ENCODE measurements at regions of chr7 and their contacts with region 1.

Region 1: GRCh38 chr7:91940572-91941341 is at the start of gene AKAP9:
- DNase-seq: peak; percentile 97
- H3K4me3 Mint-ChIP-seq: peak within 1 kb of the TSS; percentile 89
- H3K27ac Mint-ChIP-seq: peak within 1 kb of the TSS; percentile 88
- H3K4me1 Mint-ChIP-seq: peaks cover 23% of the 10 kb centered on the region
- H3K27me3 Mint-ChIP-seq: peaks cover 8% of the 10 kb centered on the region
- total RNA-seq, gene AKAP9: 36.0 and 38.2 TPM in 2 replicates

Region 2: DNA sequence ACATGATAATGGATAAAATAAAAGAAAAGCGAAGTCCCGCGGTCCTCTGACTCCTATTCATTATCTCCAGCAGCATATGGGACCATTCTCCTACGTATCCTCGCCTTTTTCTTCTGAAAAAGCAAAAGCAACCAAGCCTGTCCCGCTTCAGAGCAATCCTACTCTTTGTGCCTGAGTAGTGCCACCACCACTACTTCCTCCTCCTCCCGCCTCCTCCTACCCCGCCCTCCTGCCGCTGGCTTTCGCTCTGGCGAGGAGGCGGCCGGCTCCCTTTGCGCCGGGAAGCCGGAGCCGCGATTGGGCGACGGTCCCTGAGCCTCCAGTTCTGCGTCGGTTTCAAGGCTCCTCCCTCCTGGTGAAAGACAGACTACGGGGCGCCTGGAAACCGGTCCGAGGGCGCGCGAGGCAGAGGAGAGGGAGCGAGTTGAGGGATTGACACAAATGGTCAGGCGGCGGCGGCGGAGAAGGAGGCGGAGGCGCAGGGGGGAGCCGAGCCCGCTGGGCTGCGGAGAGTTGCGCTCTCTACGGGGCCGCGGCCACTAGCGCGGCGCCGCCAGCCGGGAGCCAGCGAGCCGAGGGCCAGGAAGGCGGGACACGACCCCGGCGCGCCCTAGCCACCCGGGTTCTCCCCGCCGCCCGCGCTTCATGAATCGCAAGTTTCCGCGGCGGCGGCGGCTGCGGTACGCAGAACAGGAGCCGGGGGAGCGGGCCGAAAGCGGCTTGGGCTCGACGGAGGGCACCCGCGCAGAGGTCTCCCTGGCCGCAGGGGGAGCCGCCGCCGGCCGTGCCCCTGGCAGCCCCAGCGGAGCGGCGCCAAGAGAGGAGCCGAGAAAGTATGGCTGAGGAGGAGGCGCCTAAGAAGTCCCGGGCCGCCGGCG is 676.5 kb before region 1 on chr7 and contains the start of gene FZD1:
- intact Hi-C with region 1: loop called (anchors 5 kb)
- DNase-seq: peak; percentile 92
- H3K4me3 Mint-ChIP-seq: peak within 1 kb of the TSS; percentile 93
- H3K27ac Mint-ChIP-seq: peak within 1 kb of the TSS; percentile 89
- H3K4me1 Mint-ChIP-seq: peaks cover 11% of the 10 kb centered on the region
- H3K27me3 Mint-ChIP-seq: peaks cover 47% of the 10 kb centered on the region
- total RNA-seq, gene FZD1: 0.79 and 0.92 TPM in 2 replicates

Region 3: GRCh38 chr7:91880413-91881241 is 60.1 kb before region 1 on chr7 and contains the start of gene MTERF1:
- intact Hi-C with region 1: loop called (anchors 1 kb)
- DNase-seq: peak; percentile 97
- H3K4me3 Mint-ChIP-seq: peak within 1 kb of the TSS; percentile 90
- H3K27ac Mint-ChIP-seq: peak within 1 kb of the TSS; percentile 90
- H3K4me1 Mint-ChIP-seq: peaks cover 27% of the 10 kb centered on the region
- H3K27me3 Mint-ChIP-seq: no peaks in the 10 kb centered on the region
- total RNA-seq, gene MTERF1: 19.5 and 20.9 TPM in 2 replicates

Measured in activated CD4-positive, alpha-beta T cell treated with anti-CD3 and anti-CD28 coated beads, Interleukin-2, amount 10 ng/mL, durations not matched to agents 24 days and 14 days (primary cell).